Ovary (tissue), 10 donors: ENCODE measurements at regions of chr1 and their contacts with region 1.

Region 1: GRCh38 chr1:70896224-70896623 is 151.4 kb downstream of the PTGER3 start:
- DNase-seq: no peak
- H3K4me3 ChIP-seq: no peak overlapping the region
- H3K27ac ChIP-seq: no peak overlapping the region
- H3K4me1 ChIP-seq: no peaks in the 10 kb centered on the region
- H3K27me3 ChIP-seq: no peaks in the 10 kb centered on the region
- CTCF ChIP-seq: no peak
- EP300 ChIP-seq: no peak
- POLR2A ChIP-seq: no peak

Region 2: GRCh38 chr1:70990469-70991253 is 94.4 kb after region 1 on chr1:
- intact Hi-C with region 1: no loop called
- DNase-seq: no peak
- H3K4me3 ChIP-seq: no peak overlapping the region
- H3K27ac ChIP-seq: no peak overlapping the region
- H3K4me1 ChIP-seq: no peaks in the 10 kb centered on the region
- H3K27me3 ChIP-seq: no peaks in the 10 kb centered on the region
- CTCF ChIP-seq: no peak
- EP300 ChIP-seq: no peak
- POLR2A ChIP-seq: no peak

Region 3: GRCh38 chr1:71269818-71270217 is 373.6 kb after region 1 on chr1:
- intact Hi-C with region 1: loop called in 1 of 4 experiments (anchors 10 kb)
- DNase-seq: no peak
- H3K4me3 ChIP-seq: no peak overlapping the region
- H3K27ac ChIP-seq: no peak overlapping the region
- H3K4me1 ChIP-seq: no peaks in the 10 kb centered on the region
- H3K27me3 ChIP-seq: no peaks in the 10 kb centered on the region
- CTCF ChIP-seq: no peak
- EP300 ChIP-seq: no peak
- POLR2A ChIP-seq: no peak